ENCODE measurements at regions of chr12 and their contacts with region 1.

Region 1: GRCh38 chr12:110312581-110313360 is 31.7 kb downstream of the ATP2A2 start:
- DNase-seq: peak; percentile 4
- ATAC-seq: no peak
- H3K4me3 ChIP-seq: no peak overlapping the region
- H3K27ac ChIP-seq: no peak overlapping the region
- H3K4me1 ChIP-seq: no peaks in the 10 kb centered on the region
- H3K27me3 ChIP-seq: no peaks in the 10 kb centered on the region
- CTCF ChIP-seq: no peak

Region 2: GRCh38 chr12:109972821-109973220 is 339.9 kb before region 1 on chr12:
- CTCF ChIA-PET with region 1: no interaction called
- POLR2A ChIA-PET with region 1: interaction called, 12 read pairs
- in situ Hi-C with region 1: no loop called
- intact Hi-C with region 1: no loop called
- DNase-seq: no peak
- ATAC-seq: no peak
- H3K4me3 ChIP-seq: no peak overlapping the region
- H3K27ac ChIP-seq: no peak overlapping the region
- H3K4me1 ChIP-seq: no peaks in the 10 kb centered on the region
- H3K27me3 ChIP-seq: no peaks in the 10 kb centered on the region
- CTCF ChIP-seq: no peak

Region 3: GRCh38 chr12:110244829-110245228 is 67.9 kb before region 1 on chr12:
- CTCF ChIA-PET with region 1: interaction called, 11 read pairs
- POLR2A ChIA-PET with region 1: no interaction called
- in situ Hi-C with region 1: no loop called
- intact Hi-C with region 1: no loop called
- DNase-seq: no peak
- ATAC-seq: no peak
- H3K4me3 ChIP-seq: no peak overlapping the region
- H3K27ac ChIP-seq: no peak overlapping the region
- H3K4me1 ChIP-seq: no peaks in the 10 kb centered on the region
- H3K27me3 ChIP-seq: no peaks in the 10 kb centered on the region
- CTCF ChIP-seq: no peak

Region 4: GRCh38 chr12:110256780-110257431 is 55.9 kb before region 1 on chr12:
- CTCF ChIA-PET with region 1: no interaction called
- POLR2A ChIA-PET with region 1: no interaction called
- in situ Hi-C with region 1: no loop called
- intact Hi-C with region 1: no loop called
- DNase-seq: no peak
- ATAC-seq: no peak; the same call in 1 of the 2 replicates
- H3K4me3 ChIP-seq: no peak overlapping the region
- H3K27ac ChIP-seq: no peak overlapping the region
- H3K4me1 ChIP-seq: 0 out of 2 replicates have a peak, but pooled peaks cover 2% of the 10 kb centered on the region
- H3K27me3 ChIP-seq: no peaks in the 10 kb centered on the region
- CTCF ChIP-seq: no peak